Activated CD4-positive, alpha-beta memory T cell treated with anti-CD3 and anti-CD28 coated beads, Interleukin-2, amount 10 ng/mL, durations not matched to agents 7 days and 5 days (primary cell): ENCODE measurements at regions of chr2 and their contacts with region 1.

Region 1: DNA sequence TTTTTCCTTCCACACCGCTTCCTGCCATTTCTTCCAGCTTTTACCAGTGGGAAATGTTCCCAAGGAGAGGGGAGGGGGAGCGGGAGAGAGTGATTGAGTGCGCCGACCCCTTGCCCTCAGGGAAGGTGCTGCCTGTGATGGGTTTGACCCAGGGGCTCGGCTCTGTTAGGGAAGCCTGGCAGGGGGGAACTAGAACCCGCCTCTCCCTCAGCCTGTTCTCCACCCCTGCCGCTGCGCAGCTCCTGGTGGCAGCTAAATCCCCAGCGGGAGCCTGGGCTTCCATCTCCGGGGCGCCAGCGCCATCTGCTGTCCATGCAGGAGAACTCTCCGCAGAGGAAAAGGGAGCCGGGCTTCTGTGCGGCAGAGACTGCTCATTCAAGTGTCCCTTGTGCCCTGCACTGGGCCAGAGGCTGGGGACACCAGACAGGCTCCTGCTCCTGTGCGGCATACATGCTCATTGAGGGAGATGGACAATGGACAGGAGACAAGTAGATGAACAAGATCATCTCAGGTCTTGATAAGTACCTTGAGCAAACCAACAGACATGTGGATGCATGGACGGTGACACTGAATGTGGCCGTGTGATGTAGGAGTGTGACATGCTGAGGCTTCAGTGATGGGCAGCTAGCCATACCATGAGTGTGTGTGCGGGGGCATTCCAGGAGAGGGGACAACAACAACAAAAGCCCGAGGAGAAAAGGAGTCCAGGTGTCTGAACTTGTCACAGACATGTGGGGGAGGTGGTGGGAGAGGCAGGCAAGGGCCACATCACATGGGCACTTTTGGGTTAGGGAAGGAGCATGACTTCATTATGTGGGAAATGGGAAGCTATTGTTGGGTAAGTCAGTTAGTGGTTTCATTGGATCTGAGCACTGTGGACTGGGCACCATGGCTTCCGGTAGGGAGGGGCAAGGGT is 13.3 kb downstream of the CHPF start:
- DNase-seq: peak; percentile 84
- H3K4me3 Mint-ChIP-seq: no peak overlapping the region
- H3K27ac Mint-ChIP-seq: no peak overlapping the region
- H3K4me1 Mint-ChIP-seq: no peaks in the 10 kb centered on the region
- H3K27me3 Mint-ChIP-seq: peaks cover 61% of the 10 kb centered on the region

Region 2: GRCh38 chr2:219402665-219403515 is 127.4 kb before region 1 on chr2:
- CTCF ChIA-PET with region 1: interaction called, 75 read pairs
- POLR2A ChIA-PET with region 1: no interaction called
- DNase-seq: peak; percentile 58
- H3K4me3 Mint-ChIP-seq: no peak overlapping the region
- H3K27ac Mint-ChIP-seq: no peak overlapping the region
- H3K4me1 Mint-ChIP-seq: no peaks in the 10 kb centered on the region
- H3K27me3 Mint-ChIP-seq: peaks cover 10% of the 10 kb centered on the region

Region 3: GRCh38 chr2:219475697-219476651 is 54.3 kb before region 1 on chr2:
- CTCF ChIA-PET with region 1: interaction called, 42 read pairs
- POLR2A ChIA-PET with region 1: no interaction called
- DNase-seq: peak; percentile 68
- H3K4me3 Mint-ChIP-seq: no peak overlapping the region
- H3K27ac Mint-ChIP-seq: no peak overlapping the region
- H3K4me1 Mint-ChIP-seq: peaks cover 4% of the 10 kb centered on the region
- H3K27me3 Mint-ChIP-seq: peaks cover 8% of the 10 kb centered on the region

Region 4: GRCh38 chr2:219490186-219490585 is 40.1 kb before region 1 on chr2:
- CTCF ChIA-PET with region 1: interaction called, 175 read pairs
- POLR2A ChIA-PET with region 1: interaction called, 3 read pairs
- DNase-seq: no peak
- H3K4me3 Mint-ChIP-seq: no peak overlapping the region
- H3K27ac Mint-ChIP-seq: no peak overlapping the region
- H3K4me1 Mint-ChIP-seq: no peaks in the 10 kb centered on the region
- H3K27me3 Mint-ChIP-seq: peaks cover 49% of the 10 kb centered on the region

Region 5: GRCh38 chr2:219509780-219510511 is 20.4 kb before region 1 on chr2:
- CTCF ChIA-PET with region 1: interaction called, 24 read pairs
- POLR2A ChIA-PET with region 1: no interaction called
- DNase-seq: peak; percentile 45
- H3K4me3 Mint-ChIP-seq: no peak overlapping the region
- H3K27ac Mint-ChIP-seq: no peak overlapping the region
- H3K4me1 Mint-ChIP-seq: peaks cover 12% of the 10 kb centered on the region
- H3K27me3 Mint-ChIP-seq: peaks cover 44% of the 10 kb centered on the region